Activated CD4-positive, alpha-beta T cell treated with anti-CD3 and anti-CD28 coated beads, Interleukin-2, amount 10 ng/mL, durations not matched to agents 24 days and 14 days (primary cell): ENCODE measurements at regions of chr3 and their contacts with region 1.

Region 1: DNA sequence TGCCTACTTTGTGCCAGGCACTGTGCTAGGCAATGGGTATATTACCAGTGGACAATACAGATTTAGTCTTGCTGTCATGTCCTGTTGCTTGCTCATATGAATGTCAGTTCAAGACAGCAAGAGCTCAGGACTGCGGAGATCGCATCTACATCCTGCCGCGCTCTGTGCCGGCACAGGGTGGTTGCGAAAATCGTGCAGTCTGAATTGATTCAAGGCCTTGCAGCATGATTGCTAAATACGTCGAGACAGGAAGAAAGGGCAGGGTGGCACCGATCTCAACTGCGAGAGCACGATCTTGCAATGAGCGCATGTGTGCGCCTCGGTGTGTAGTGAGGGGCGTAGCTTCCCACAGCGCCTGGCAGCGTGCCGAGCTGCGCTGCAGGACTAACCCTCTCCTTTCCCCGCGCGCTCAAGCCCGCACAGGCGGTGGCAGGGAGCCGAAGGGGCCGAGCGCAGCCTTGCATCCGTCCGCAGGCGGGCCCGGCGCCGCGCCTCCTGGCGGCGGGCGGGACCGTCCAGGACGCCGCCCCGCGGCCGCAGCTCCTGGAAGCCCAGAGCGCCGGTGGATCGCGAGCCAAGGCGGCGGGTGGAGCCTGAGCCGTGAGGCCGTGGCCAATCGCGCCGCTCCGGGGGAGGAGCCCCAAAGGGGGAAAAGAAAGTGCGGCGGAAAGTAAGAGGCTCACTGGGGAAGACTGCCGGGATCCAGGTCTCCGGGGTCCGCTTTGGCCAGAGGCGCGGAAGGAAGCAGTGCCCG is at the start of gene IL1RAP:
- DNase-seq: peak; percentile 97
- H3K4me3 Mint-ChIP-seq: peak within 1 kb of the TSS; percentile 90
- H3K27ac Mint-ChIP-seq: peak within 1 kb of the TSS; percentile 93
- H3K4me1 Mint-ChIP-seq: peaks cover 34% of the 10 kb centered on the region
- H3K27me3 Mint-ChIP-seq: peaks cover 3% of the 10 kb centered on the region
- total RNA-seq, gene IL1RAP: 24.8 and 27.8 TPM in 2 replicates

Region 2: DNA sequence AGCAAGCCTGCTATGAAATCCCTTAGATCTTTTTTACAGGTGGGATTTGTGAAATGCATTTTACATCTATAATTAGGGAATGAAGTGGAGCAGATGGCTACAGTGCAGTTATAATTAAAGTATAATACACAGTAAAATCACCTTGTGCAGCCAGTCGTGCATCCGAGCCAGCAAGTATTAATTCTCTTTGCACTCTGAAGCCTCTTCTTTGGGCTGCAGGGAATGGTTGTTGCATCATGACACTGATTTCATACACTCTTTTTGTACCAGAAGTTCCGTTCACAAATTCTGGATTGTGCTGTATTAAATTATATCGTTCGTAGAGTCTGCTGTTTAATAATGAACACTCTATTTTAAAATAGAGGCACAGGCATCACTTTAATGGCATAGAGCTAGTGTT is 911.1 kb before region 1 on chr3:
- intact Hi-C with region 1: no loop called
- DNase-seq: no peak
- H3K4me3 Mint-ChIP-seq: no peak overlapping the region
- H3K27ac Mint-ChIP-seq: no peak overlapping the region
- H3K4me1 Mint-ChIP-seq: no peaks in the 10 kb centered on the region
- H3K27me3 Mint-ChIP-seq: peaks cover 2% of the 10 kb centered on the region

Region 3: GRCh38 chr3:190491533-190492054 is 22.0 kb before region 1 on chr3:
- intact Hi-C with region 1: loop called (anchors 1 kb)
- DNase-seq: no peak
- H3K4me3 Mint-ChIP-seq: peak overlapping the region; percentile 11
- H3K27ac Mint-ChIP-seq: peak overlapping the region; percentile 12
- H3K4me1 Mint-ChIP-seq: peaks cover 22% of the 10 kb centered on the region
- H3K27me3 Mint-ChIP-seq: peaks cover 69% of the 10 kb centered on the region

Region 4: GRCh38 chr3:190533511-190534277 is 20.1 kb after region 1 on chr3:
- intact Hi-C with region 1: loop called (anchors 2 kb)
- DNase-seq: no peak
- H3K4me3 Mint-ChIP-seq: no peak overlapping the region
- H3K27ac Mint-ChIP-seq: no peak overlapping the region
- H3K4me1 Mint-ChIP-seq: peaks cover 28% of the 10 kb centered on the region
- H3K27me3 Mint-ChIP-seq: no peaks in the 10 kb centered on the region

Region 5: DNA sequence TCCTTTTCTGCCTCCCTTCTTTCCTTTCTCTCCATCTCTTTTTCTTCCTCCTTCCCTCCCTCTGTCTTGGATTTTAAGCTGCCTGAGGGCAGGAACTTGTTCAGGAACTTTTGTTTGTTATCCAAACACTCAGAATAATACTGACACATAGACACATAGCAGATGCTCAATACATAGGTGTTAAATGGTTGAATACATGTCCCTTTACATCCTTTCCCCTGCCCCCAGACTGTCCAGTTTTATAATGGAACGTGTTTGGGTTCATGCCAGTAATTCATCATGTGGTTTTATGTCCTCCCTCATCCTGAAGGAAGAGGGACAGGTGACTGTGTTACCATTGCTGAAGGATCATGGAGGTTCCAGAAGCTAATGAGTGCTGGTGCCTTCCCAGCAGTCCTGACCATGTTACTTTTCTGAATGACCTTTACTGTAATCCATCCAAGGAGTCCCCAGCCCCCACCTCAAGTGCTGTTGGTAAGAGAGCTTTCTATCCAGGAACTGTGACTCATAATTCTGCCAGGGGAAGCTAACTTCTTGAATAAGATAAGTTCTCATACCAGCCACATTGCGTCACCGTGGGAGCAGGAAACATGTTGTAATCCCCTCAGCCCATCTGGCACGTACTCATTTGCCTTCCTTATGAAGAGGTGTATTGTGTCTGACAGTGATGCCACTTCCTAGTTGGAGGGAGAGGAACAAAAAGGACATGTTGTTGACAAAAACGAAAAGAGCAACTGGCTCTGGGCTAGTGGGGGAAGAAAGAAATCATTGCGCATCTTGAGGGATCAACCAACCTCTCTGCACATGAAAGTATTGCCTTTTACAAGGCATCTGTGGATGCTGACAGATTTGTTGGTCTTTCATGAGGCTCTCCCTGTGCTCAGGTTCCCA is 52.7 kb after region 1 on chr3:
- intact Hi-C with region 1: loop called (anchors 1 kb)
- DNase-seq: peak; percentile 90
- H3K4me3 Mint-ChIP-seq: peak overlapping the region; percentile 41
- H3K27ac Mint-ChIP-seq: peak overlapping the region; percentile 94
- H3K4me1 Mint-ChIP-seq: peaks cover 69% of the 10 kb centered on the region
- H3K27me3 Mint-ChIP-seq: no peaks in the 10 kb centered on the region

Region 6: DNA sequence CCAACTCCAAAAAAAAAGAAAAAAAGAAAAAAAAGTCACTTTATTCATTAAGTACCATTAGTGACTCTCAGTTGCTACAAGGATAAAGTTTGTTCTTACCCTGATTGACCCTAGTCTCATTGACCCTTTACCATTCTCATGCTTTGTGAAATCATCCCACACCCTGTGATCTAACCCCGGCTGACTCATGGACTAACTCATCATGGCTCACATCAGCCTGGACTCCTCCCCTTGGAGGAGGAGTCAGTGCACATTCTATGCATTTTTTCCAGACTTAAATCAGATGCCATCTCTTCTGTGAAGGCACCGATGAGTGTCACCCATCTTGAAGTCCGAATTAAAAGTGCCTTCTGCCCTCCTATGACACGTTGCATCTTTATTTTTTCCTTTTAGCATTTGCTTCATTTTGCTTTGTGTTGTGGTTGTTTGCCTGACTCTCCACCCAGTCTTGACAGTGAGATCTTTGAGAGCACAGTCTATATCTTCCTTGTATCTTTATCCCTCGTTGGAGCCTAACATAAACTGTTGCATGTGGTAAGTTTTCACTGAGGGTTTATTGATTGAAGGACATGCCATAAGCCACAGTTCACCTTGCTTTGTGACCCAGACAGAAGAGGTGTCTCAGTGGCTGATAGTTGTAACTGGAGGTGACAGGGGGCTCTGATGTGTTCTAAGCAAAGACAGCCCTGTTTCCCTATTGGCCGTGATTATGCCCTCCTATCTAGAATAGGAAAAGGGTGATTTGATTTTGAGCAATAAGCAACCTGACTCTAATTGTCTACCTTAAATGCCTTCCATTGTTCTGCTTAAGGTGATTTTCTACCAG is 72.4 kb after region 1 on chr3:
- intact Hi-C with region 1: loop called (anchors 1 kb)
- DNase-seq: peak; percentile 85
- H3K4me3 Mint-ChIP-seq: peak overlapping the region; percentile 65
- H3K27ac Mint-ChIP-seq: peak overlapping the region; percentile 94
- H3K4me1 Mint-ChIP-seq: peaks cover 45% of the 10 kb centered on the region
- H3K27me3 Mint-ChIP-seq: no peaks in the 10 kb centered on the region

Region 7: DNA sequence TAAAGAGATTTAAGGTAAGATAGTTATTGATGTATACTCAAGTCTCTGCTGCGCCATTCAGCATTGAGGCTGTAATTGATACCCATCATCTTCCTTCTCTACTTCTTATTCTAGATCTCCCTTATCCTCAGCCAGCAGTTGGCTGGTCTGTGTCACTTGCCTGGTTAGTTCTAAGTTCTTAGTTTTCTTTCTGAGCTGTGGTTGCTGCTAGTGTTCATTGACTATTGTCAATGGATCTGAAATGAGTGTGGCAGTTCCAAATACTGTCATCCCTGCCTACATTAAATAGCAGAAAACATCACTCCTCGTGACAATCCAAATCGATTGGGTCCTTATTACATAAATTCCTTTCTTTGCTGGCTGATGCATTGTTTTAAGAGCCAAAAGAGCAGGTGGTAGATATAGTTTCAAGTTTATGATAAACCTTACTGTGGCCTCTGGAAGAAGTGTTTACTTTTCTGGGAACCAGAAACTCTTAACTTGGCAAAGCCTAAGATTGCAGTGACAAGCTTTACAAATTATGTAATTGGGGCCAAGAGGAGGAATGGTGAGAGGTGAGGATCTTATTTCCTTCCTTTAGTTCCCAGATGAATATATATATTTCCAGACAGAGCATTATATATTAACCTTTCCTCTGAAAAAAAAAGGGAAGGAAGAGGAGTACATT is 180.9 kb after region 1 on chr3:
- intact Hi-C with region 1: loop called (anchors 1 kb)
- DNase-seq: no peak
- H3K4me3 Mint-ChIP-seq: no peak overlapping the region
- H3K27ac Mint-ChIP-seq: no peak overlapping the region
- H3K4me1 Mint-ChIP-seq: peaks cover 11% of the 10 kb centered on the region
- H3K27me3 Mint-ChIP-seq: peaks cover 8% of the 10 kb centered on the region